Activated CD8-positive, alpha-beta memory T cell treated with anti-CD3 and anti-CD28 coated beads, Interleukin-2, amount 10 ng/mL, durations not matched to agents 7 days and 5 days (primary cell): ENCODE measurements at regions of chr12 and their contacts with region 1.

Region 1: DNA sequence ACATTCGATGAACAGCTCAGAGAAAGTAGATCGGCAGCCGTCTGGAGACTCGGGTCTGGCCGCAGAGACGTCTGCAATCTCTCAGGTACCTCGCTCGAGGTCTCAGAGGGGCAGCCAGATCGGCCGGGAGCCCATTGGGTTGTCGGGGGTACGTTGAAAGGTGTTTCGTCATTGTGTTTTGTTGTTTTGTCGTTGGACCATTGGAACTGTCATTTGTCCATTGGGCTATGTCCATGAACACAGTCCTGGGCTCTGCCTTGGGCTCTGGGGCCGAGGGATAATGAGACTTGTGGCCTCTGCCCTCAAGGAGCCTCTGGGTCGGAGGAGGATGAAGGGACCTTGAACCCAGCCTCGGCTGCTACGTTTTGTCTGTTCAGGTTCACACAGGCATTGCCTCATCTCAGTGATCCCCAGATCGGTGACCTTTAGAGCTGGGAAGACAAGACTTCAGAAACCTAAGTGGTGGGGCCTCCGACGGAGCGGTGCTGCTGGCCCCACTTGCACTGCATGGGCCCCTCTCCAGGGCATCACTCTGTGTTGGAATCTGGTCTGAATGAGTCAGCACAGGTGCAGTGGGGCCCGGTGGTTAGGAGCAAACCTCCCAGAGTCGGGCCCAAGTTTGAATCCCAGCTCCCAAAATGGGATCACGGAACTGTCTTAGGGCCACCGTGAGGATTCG is 23.6 kb upstream of the MLXIP start:
- DNase-seq: no peak
- ATAC-seq: no peak
- H3K4me3 Mint-ChIP-seq: no peak overlapping the region
- H3K27ac Mint-ChIP-seq: no peak overlapping the region
- H3K4me1 Mint-ChIP-seq: peaks cover 6% of the 10 kb centered on the region
- H3K27me3 Mint-ChIP-seq: no peaks in the 10 kb centered on the region

Region 2: GRCh38 chr12:121741743-121742142 is 313.2 kb before region 1 on chr12:
- CTCF ChIA-PET with region 1: no interaction called
- DNase-seq: no peak
- ATAC-seq: no peak
- H3K4me3 Mint-ChIP-seq: no peak overlapping the region
- H3K27ac Mint-ChIP-seq: no peak overlapping the region
- H3K4me1 Mint-ChIP-seq: no peaks in the 10 kb centered on the region
- H3K27me3 Mint-ChIP-seq: no peaks in the 10 kb centered on the region

Region 3: DNA sequence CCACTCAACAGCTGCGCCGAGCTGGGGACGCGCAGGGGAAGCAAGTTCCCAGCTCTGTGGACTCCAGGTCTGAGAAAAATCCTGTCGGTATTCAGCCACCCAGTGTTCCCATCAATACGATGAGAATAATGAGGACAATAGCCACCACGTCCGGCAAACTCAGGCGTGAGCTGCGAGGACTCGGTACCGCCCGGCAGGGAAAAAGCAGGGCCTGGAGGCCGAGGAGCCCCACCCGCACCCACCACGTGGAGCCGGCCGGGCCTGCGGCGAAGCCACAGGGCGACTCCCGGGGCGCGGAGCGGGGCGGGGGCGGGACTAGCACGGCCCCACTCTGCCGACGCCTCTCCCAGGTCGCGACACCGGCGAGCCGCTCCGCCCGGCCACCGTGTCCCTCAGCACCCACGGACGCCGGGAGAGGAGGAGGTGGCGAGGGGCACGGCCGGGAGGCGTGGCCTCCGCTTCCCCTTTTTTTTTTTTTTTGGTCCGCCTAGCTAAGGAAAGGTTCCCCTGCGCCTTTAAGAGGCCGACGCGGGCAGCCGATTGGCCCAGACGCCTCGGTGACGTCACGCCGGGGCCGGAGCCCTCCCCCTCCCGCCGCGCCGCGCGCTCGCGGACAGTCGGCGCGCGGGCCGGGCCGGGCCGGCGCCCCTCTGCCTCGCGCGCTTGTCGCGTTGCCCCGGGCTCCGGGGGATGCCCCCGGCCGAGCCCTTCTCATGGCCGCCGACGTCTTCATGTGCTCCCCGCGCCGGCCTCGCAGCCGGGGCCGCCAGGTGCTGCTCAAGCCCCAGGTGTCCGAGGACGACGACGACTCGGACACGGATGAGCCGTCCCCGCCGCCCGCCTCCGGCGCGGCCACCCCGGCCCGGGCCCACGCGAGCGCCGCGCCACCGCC is 23.4 kb after region 1 on chr12 and contains the start of gene MLXIP:
- CTCF ChIA-PET with region 1: interaction called, 13 read pairs
- DNase-seq: peak; percentile 94
- ATAC-seq: peak; percentile 87
- H3K4me3 Mint-ChIP-seq: peak within 1 kb of the TSS; percentile 84
- H3K27ac Mint-ChIP-seq: peak within 1 kb of the TSS; percentile 88
- H3K4me1 Mint-ChIP-seq: peaks cover 43% of the 10 kb centered on the region
- H3K27me3 Mint-ChIP-seq: peaks cover under 1% of the 10 kb centered on the region
- total RNA-seq, gene MLXIP: 36.1 to 36.4 TPM

Region 4: DNA sequence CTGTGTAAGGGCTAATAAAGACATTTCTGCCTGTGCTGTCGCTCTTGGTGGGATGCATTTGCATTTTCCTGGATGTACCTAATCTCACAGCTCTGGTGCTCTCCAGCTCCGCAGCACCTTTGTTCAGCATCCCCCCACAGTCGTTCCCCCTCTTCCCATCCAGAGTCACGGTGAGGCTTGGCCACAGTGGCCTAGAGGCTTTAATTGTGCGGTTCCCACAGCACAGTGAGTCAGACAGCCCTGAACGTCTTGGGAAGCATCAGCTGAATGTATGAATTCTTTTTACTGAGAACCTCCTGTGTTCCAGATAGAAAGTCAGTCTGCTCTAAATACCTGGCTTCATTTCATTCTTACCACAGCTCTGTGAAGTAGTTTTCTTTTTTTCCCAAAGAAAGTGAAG is 52.3 kb after region 1 on chr12:
- CTCF ChIA-PET with region 1: interaction called, 12 read pairs
- DNase-seq: no peak
- ATAC-seq: no peak
- H3K4me3 Mint-ChIP-seq: no peak overlapping the region
- H3K27ac Mint-ChIP-seq: no peak overlapping the region
- H3K4me1 Mint-ChIP-seq: peaks cover 54% of the 10 kb centered on the region
- H3K27me3 Mint-ChIP-seq: no peaks in the 10 kb centered on the region

Region 5: DNA sequence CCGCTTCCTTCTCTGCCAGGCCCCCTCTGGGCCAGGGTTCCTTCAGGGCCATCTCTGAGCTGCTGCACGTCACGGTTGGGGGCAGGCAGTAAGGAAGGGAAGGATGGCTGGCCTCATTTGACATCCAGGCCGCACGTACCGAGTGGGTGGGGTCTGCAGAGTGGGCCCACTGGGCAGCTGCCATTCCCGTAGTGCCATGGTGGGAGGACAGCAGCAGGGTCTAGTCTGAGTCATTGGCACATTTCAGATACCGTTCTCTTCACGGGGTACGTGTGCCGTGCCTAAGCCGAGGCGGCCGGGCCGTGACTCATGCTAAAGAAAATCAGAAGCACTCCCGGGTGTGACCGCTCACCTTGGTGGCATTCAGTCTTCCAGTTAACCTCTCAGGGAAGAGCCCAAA is 75.2 kb after region 1 on chr12:
- CTCF ChIA-PET with region 1: interaction called, 130 read pairs
- DNase-seq: no peak
- ATAC-seq: no peak
- H3K4me3 Mint-ChIP-seq: no peak overlapping the region
- H3K27ac Mint-ChIP-seq: no peak overlapping the region
- H3K4me1 Mint-ChIP-seq: peaks cover 8% of the 10 kb centered on the region
- H3K27me3 Mint-ChIP-seq: no peaks in the 10 kb centered on the region